Gastrocnemius medialis (tissue), 4 donors: ENCODE measurements at regions of chr2 and their contacts with region 1.

Region 1: DNA sequence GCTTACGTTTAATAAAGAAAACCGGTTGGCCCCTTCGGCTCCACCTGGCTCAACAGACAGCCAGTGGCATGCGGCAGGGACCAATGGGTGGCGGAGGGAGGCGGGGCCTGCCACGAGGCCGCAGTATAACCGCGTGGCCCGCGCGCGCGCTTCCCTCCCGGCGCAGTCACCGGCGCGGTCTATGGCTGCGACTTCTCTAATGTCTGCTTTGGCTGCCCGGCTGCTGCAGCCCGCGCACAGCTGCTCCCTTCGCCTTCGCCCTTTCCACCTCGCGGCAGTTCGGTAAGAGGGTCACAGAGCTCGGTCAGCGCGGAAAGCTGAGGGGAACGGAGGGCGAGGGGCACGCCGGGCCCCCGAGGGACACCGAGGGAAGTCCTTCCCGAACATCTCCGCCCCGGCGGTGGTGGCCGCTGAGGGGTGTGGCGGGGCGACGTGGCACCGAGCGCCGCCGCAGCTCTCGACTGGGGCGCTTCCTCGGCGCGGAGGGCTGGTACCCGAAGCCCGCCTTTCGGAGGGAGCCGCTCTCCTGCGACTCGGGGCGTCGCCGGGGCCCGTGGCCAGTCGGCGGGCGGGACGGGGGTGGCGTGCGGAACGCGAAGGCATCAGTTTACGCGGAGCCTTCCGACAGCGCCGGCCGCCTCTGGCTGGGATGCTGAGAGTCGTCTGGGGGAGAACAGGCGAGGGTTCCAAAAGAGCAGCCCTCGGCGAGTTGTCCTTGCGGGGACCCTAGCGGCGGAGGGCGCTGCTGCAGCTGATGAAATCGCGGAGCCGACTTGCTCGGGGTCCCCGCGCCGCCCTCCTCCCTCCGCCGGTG is at the start of gene MTHFD2:
- DNase-seq: peak; percentile 83 to 87
- ATAC-seq: peak; percentile 69 to 72
- H3K4me3 ChIP-seq: peak within 1 kb of the TSS; percentile 61 to 80 (median 78)
- H3K27ac ChIP-seq: peak within 1 kb of the TSS; percentile 77 to 93 (median 88)
- H3K4me1 ChIP-seq: peaks cover 33 to 39% of the 10 kb centered on the region in 2 donors
- H3K27me3 ChIP-seq: no peaks in the 10 kb centered on the region
- CTCF ChIP-seq: peak; percentile 74 to 89 (median 76)
- POLR2A ChIP-seq: peak; percentile 68 to 82
- total RNA-seq, gene MTHFD2: 29.0 to 53.5 (median 32.5) TPM

Region 2: GRCh38 chr2:74147727-74148456 is 50.8 kb before region 1 on chr2 and contains the start of gene BOLA3:
- in situ Hi-C with region 1: no loop called
- intact Hi-C with region 1: no loop called
- DNase-seq: peak; percentile 68 to 74
- ATAC-seq: peak; percentile 86 to 92
- H3K4me3 ChIP-seq: peak within 1 kb of the TSS; percentile 68 to 84 (median 78)
- H3K27ac ChIP-seq: peak within 1 kb of the TSS; percentile 51 to 78 (median 62)
- H3K4me1 ChIP-seq: peaks cover 7 to 9% of the 10 kb centered on the region in 2 donors
- H3K27me3 ChIP-seq: no peaks in the 10 kb centered on the region
- CTCF ChIP-seq: peak in 4 of 5 experiments; percentile 47 to 80 (median 64)
- POLR2A ChIP-seq: no peak
- total RNA-seq, gene BOLA3: 32.2 to 114 (median 69.5) TPM

Region 3: GRCh38 chr2:74178201-74179062 is 20.2 kb before region 1 on chr2 and contains the start of gene MOB1A:
- in situ Hi-C with region 1: no loop called
- intact Hi-C with region 1: loop called (anchors 2 kb)
- DNase-seq: peak; percentile 96 to 97
- ATAC-seq: peak; percentile 99
- H3K4me3 ChIP-seq: peak within 1 kb of the TSS; percentile 67 to 92 (median 80)
- H3K27ac ChIP-seq: peak within 1 kb of the TSS; percentile 84 to 93 (median 87)
- H3K4me1 ChIP-seq: peaks cover 26 to 31% of the 10 kb centered on the region in 2 donors
- H3K27me3 ChIP-seq: no peaks in the 10 kb centered on the region
- CTCF ChIP-seq: no peak
- POLR2A ChIP-seq: peak; percentile 89 to 94
- total RNA-seq, gene MOB1A: 19.9 to 44.3 (median 35.5) TPM

Region 4: GRCh38 chr2:74278176-74278575 is 79.5 kb after region 1 on chr2:
- in situ Hi-C with region 1: no loop called
- intact Hi-C with region 1: no loop called
- DNase-seq: no peak
- ATAC-seq: no peak
- H3K4me3 ChIP-seq: no peak overlapping the region
- H3K27ac ChIP-seq: no peak overlapping the region
- H3K4me1 ChIP-seq: no peaks in the 10 kb centered on the region
- H3K27me3 ChIP-seq: no peaks in the 10 kb centered on the region
- CTCF ChIP-seq: no peak
- POLR2A ChIP-seq: no peak